Activated T-helper 2 cell treated with anti-CD3 and anti-CD28 coated beads, Interferon-gamma antibody, Interleukin-2, Interleukin-4, amounts not matched to agents 10 μg/mL and 5 μg/mL and 100 μg/mL, durations not matched to agents 14 hours and 24 hours and 36 hours (primary cell): ENCODE measurements at regions of chr3 and their contacts with region 1.

Region 1: DNA sequence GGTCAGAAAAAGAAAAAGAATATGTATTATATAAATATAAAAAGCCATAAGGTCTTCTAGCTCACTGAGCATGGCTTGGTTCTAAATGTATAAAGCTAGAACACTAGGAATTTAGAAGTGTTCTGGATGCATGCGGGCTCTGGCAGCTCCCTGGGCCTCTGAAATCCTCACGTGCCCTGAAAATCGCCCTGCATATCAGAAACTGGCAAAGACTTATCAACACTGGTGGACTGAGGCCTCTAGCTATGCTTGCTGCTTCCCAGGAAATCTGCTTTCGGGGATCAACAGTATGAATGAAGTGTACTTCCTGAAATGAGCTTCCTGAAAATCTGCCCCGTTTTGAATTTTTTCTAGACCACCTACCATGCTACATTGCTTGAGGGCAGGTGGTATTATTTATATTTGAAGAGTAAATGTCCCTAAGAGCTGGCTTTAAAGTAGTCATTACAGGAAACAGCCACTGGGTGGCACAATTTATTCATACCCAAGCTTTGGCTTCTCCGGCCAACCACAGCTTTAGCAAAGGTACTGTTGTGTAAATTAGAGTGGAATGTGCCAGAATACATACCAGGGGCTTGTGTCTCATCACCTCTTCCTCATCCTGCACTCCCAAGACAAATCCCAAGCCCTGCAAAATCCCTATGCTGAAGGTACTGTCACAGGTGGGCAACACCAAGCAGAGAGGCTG is 17.7 kb downstream of the CRTAP start:
- DNase-seq: no peak
- H3K4me3 Mint-ChIP-seq: no peak overlapping the region
- H3K27ac Mint-ChIP-seq: no peak overlapping the region
- H3K4me1 Mint-ChIP-seq: peaks cover 4% of the 10 kb centered on the region
- H3K27me3 Mint-ChIP-seq: no peaks in the 10 kb centered on the region

Region 2: GRCh38 chr3:33171580-33171979 is 40.1 kb after region 1 on chr3:
- intact Hi-C with region 1: no loop called
- DNase-seq: no peak
- H3K4me3 Mint-ChIP-seq: no peak overlapping the region
- H3K27ac Mint-ChIP-seq: peak overlapping the region; percentile 60
- H3K4me1 Mint-ChIP-seq: peaks cover 9% of the 10 kb centered on the region
- H3K27me3 Mint-ChIP-seq: no peaks in the 10 kb centered on the region

Region 3: GRCh38 chr3:33372218-33373081 is 241.0 kb after region 1 on chr3:
- intact Hi-C with region 1: loop called (anchors 1 kb)
- DNase-seq: peak; percentile 23
- H3K4me3 Mint-ChIP-seq: no peak overlapping the region
- H3K27ac Mint-ChIP-seq: no peak overlapping the region
- H3K4me1 Mint-ChIP-seq: peaks cover 6% of the 10 kb centered on the region
- H3K27me3 Mint-ChIP-seq: peaks cover 12% of the 10 kb centered on the region

Region 4: DNA sequence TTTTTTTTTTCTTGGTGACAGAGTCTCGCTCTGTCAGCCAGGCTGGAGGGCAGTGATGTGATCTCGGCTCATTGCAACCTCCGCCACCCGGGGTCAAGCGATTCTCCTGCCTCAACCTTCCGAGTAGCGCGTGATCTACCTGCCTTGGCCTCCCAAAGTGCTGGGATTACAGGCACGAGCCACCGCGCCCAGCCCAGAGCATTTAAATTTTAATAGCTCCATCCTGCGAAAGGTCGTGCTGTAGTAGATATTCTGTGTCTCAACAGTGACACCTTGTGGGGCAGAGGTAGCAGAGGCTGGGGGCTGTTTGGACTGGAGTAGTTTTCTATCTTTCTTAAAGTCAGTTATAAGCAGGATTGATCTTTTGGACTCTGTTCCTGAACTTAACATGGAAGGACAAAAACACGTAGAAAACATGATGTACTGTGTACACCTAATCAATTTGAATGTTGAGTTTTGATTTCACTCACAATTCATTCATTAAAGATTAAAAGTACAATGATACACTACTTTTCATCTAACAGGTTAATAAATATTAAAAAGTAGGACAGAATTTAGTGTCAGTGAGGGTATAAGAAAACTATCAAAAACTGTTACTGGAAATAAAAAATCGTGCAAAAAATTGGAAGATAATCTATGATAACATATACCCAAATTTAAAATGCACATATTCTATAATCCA is 656.0 kb after region 1 on chr3:
- intact Hi-C with region 1: loop called (anchors 1 kb)
- DNase-seq: peak; percentile 34
- H3K4me3 Mint-ChIP-seq: no peak overlapping the region
- H3K27ac Mint-ChIP-seq: no peak overlapping the region
- H3K4me1 Mint-ChIP-seq: peaks cover 14% of the 10 kb centered on the region
- H3K27me3 Mint-ChIP-seq: peaks cover 23% of the 10 kb centered on the region